Colonic mucosa (tissue), 4 donors: ENCODE measurements at regions of chr4 and their contacts with region 1.

Region 1: DNA sequence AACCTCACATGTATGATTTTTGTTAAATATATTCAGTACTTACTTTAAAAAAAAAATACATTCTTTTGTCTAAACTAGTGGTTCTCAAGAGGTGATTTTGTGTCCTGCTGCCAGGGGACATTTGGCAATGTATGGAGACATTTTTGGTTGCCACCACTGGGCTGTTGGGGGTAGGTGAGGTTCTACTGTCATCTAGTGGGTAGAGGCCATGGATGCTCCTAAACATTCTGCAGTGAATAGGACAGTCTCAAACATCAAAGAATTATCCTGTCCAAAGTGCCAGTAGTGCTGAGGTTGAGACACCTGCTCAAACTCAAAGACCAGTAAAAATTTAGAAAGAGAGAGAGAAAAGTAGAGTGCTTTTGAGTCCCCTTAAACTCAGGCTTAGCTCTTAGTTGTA is 32.9 kb upstream of the PGM2 start:
- DNase-seq: no peak
- H3K4me3 ChIP-seq: no peak overlapping the region
- H3K27ac ChIP-seq: no peak overlapping the region
- H3K4me1 ChIP-seq: no peaks in the 10 kb centered on the region
- H3K27me3 ChIP-seq: no peaks in the 10 kb centered on the region
- CTCF ChIP-seq: peak; percentile 34

Region 2: GRCh38 chr4:37441276-37441994 is 352.1 kb before region 1 on chr4:
- intact Hi-C with region 1: loop called (anchors 10 kb)
- DNase-seq: peak; percentile 49
- H3K4me3 ChIP-seq: no peak overlapping the region
- H3K27ac ChIP-seq: no peak overlapping the region
- H3K4me1 ChIP-seq: no peaks in the 10 kb centered on the region
- H3K27me3 ChIP-seq: no peaks in the 10 kb centered on the region
- CTCF ChIP-seq: no peak

Region 3: GRCh38 chr4:37609626-37610025 is 183.9 kb before region 1 on chr4:
- intact Hi-C with region 1: loop called (anchors 5 kb)
- DNase-seq: no peak
- H3K4me3 ChIP-seq: no peak overlapping the region
- H3K27ac ChIP-seq: no peak overlapping the region
- H3K4me1 ChIP-seq: no peaks in the 10 kb centered on the region
- H3K27me3 ChIP-seq: no peaks in the 10 kb centered on the region
- CTCF ChIP-seq: no peak